ENCODE measurements at regions of chr21 and their contacts with region 1.

Region 1: DNA sequence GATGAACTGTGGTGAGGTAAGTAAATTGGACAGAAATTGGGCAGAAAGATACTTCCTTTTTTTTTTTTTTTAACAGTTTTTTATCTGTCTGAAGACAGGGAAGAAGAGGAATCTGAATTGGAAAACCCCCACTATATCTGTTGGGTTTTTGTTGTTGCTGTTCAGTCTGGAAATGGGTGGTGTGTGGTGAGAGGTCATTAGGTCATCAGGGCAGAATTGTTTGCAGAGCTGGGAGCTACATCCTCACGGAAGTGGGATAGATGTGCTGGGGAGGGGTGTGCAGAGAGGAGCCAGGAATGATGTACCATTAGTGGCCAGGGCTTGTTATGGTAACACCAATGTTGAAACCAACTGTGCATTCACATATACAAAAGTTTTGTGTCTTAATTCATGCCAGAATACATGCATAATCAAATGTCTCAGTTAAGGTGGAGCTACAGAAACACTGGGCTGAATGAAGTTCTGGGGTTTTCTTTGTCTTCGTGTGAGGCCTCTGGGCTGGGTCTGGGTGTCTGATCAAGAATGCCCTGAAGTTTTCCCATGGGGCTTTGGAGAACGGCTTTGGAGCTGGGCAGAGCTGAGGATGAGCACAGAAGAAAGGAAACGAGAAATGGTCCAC is 12.4 kb downstream of the USP25 start:
- DNase-seq: no peak
- ATAC-seq: peak in 2 of 8 donors; percentile 39 to 58
- H3K4me3 ChIP-seq: no peak overlapping the region
- H3K27ac ChIP-seq: no peak overlapping the region
- H3K4me1 ChIP-seq: peaks cover 9 to 61% (median 48%) of the 10 kb centered on the region in 9 donors
- H3K27me3 ChIP-seq: no peaks in the 10 kb centered on the region
- CTCF ChIP-seq: no peak

Region 2: DNA sequence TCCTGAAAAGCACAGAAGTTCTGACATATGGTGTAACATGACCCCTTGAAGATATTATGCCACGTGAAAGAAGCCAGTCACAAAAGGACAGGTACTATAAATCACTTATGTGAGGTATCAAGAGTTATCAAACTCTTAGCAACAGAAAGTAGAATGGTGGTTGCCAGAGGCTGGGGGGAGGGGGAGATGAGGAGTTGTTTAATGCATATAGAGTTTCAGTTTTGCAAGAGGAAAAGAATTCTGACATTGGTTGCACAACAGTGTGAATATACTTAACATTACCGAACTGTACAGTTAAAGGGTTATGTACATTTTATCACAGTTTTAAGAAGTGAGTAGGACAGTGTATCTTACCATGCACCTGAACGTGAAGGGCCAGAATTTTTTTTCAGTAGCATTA is 67.7 kb after region 1 on chr21:
- intact Hi-C with region 1: loop called in 1 of 10 experiments (anchors 10 kb)
- DNase-seq: no peak
- ATAC-seq: no peak
- H3K4me3 ChIP-seq: no peak overlapping the region
- H3K27ac ChIP-seq: no peak overlapping the region
- H3K4me1 ChIP-seq: peaks cover 0 to 4% (median 0%) of the 10 kb centered on the region in 9 donors
- H3K27me3 ChIP-seq: no peaks in the 10 kb centered on the region
- CTCF ChIP-seq: no peak

Region 3: GRCh38 chr21:16102113-16102512 is 360.0 kb after region 1 on chr21:
- intact Hi-C with region 1: no loop called
- DNase-seq: no peak
- ATAC-seq: no peak
- H3K4me3 ChIP-seq: no peak overlapping the region
- H3K27ac ChIP-seq: no peak overlapping the region
- H3K4me1 ChIP-seq: no peaks in the 10 kb centered on the region
- H3K27me3 ChIP-seq: no peaks in the 10 kb centered on the region
- CTCF ChIP-seq: no peak